GM12878 (cell line): ENCODE measurements at regions of chr12 and their contacts with region 1.

Region 1: GRCh38 chr12:66301944-66302826 is at the start of gene HELB:
- DNase-seq: peak; percentile 88
- ATAC-seq: peak; percentile 91
- H3K4me3 ChIP-seq: peak within 1 kb of the TSS; percentile 85
- H3K27ac ChIP-seq: peak within 1 kb of the TSS; percentile 87
- H3K4me1 ChIP-seq: no peaks in the 10 kb centered on the region; the same call in 1 of the 2 replicates
- H3K27me3 ChIP-seq: no peaks in the 10 kb centered on the region
- CTCF ChIP-seq: no peak
- EP300 ChIP-seq: no peak
- POLR2A ChIP-seq: peak; percentile 94
- RAD21 ChIP-seq: no peak
- polyA plus RNA-seq, gene HELB: 0.58 to 1.0 TPM

Region 2: GRCh38 chr12:66196806-66197205 is 105.4 kb before region 1 on chr12:
- CTCF ChIA-PET with region 1: no interaction called
- POLR2A ChIA-PET with region 1: interaction called, 5 read pairs
- RAD21 ChIA-PET with region 1: interaction called, 10 read pairs
- SMC1A ChIA-PET with region 1: interaction called, 13 read pairs
- in situ Hi-C with region 1: no loop called
- intact Hi-C with region 1: no loop called
- DNase-seq: peak; percentile 54
- ATAC-seq: peak; percentile 88
- H3K4me3 ChIP-seq: no peak overlapping the region
- H3K27ac ChIP-seq: no peak overlapping the region; the same call in 1 of the 2 replicates
- H3K4me1 ChIP-seq: peaks cover 21% of the 10 kb centered on the region
- H3K27me3 ChIP-seq: no peaks in the 10 kb centered on the region
- CTCF ChIP-seq: no peak
- EP300 ChIP-seq: peak; percentile 39 to 79; a peak in 3 of 4 replicates
- POLR2A ChIP-seq: no peak
- RAD21 ChIP-seq: no peak

Region 3: GRCh38 chr12:66269757-66270383 is 32.3 kb before region 1 on chr12:
- CTCF ChIA-PET with region 1: interaction called, 17 read pairs
- POLR2A ChIA-PET with region 1: no interaction called
- RAD21 ChIA-PET with region 1: interaction called, 4 read pairs
- SMC1A ChIA-PET with region 1: interaction called, 6 read pairs
- in situ Hi-C with region 1: no loop called
- intact Hi-C with region 1: no loop called
- DNase-seq: peak; percentile 5
- ATAC-seq: peak; percentile 80
- H3K4me3 ChIP-seq: no peak overlapping the region
- H3K27ac ChIP-seq: no peak overlapping the region
- H3K4me1 ChIP-seq: peaks cover 12% of the 10 kb centered on the region
- H3K27me3 ChIP-seq: no peaks in the 10 kb centered on the region
- CTCF ChIP-seq: peak; percentile 46 to 59 (median 53); a peak in 5 of 6 replicates
- EP300 ChIP-seq: no peak
- POLR2A ChIP-seq: no peak
- RAD21 ChIP-seq: peak; percentile 73

Region 4: GRCh38 chr12:66314278-66314677 is 12.1 kb after region 1 on chr12:
- CTCF ChIA-PET with region 1: interaction called, 3 read pairs
- POLR2A ChIA-PET with region 1: interaction called, 19 read pairs
- RAD21 ChIA-PET with region 1: interaction called, 4 read pairs
- SMC1A ChIA-PET with region 1: interaction called, 35 read pairs
- in situ Hi-C with region 1: no loop called
- intact Hi-C with region 1: no loop called
- DNase-seq: no peak
- ATAC-seq: no peak
- H3K4me3 ChIP-seq: no peak overlapping the region
- H3K27ac ChIP-seq: no peak overlapping the region
- H3K4me1 ChIP-seq: no peaks in the 10 kb centered on the region
- H3K27me3 ChIP-seq: no peaks in the 10 kb centered on the region
- CTCF ChIP-seq: no peak
- EP300 ChIP-seq: no peak
- POLR2A ChIP-seq: no peak
- RAD21 ChIP-seq: no peak

Region 5: GRCh38 chr12:66321435-66321834 is 19.2 kb after region 1 on chr12:
- CTCF ChIA-PET with region 1: interaction called, 3 read pairs
- POLR2A ChIA-PET with region 1: interaction called, 19 read pairs
- RAD21 ChIA-PET with region 1: interaction called, 4 read pairs
- SMC1A ChIA-PET with region 1: interaction called, 4 read pairs
- in situ Hi-C with region 1: no loop called
- intact Hi-C with region 1: no loop called
- DNase-seq: no peak
- ATAC-seq: peak; percentile 15; the same call in 1 of the 3 replicates
- H3K4me3 ChIP-seq: no peak overlapping the region
- H3K27ac ChIP-seq: no peak overlapping the region
- H3K4me1 ChIP-seq: no peaks in the 10 kb centered on the region
- H3K27me3 ChIP-seq: no peaks in the 10 kb centered on the region
- CTCF ChIP-seq: no peak
- EP300 ChIP-seq: no peak
- POLR2A ChIP-seq: no peak
- RAD21 ChIP-seq: no peak

Region 6: GRCh38 chr12:66453844-66454243 is 151.7 kb after region 1 on chr12:
- CTCF ChIA-PET with region 1: no interaction called
- POLR2A ChIA-PET with region 1: no interaction called
- RAD21 ChIA-PET with region 1: no interaction called
- SMC1A ChIA-PET with region 1: no interaction called
- in situ Hi-C with region 1: no loop called
- intact Hi-C with region 1: no loop called
- DNase-seq: no peak
- ATAC-seq: peak; percentile 44; the same call in 1 of the 3 replicates
- H3K4me3 ChIP-seq: no peak overlapping the region
- H3K27ac ChIP-seq: no peak overlapping the region
- H3K4me1 ChIP-seq: no peaks in the 10 kb centered on the region
- H3K27me3 ChIP-seq: no peaks in the 10 kb centered on the region
- CTCF ChIP-seq: no peak
- EP300 ChIP-seq: no peak
- POLR2A ChIP-seq: no peak
- RAD21 ChIP-seq: no peak